A673 (cell line): ENCODE measurements at regions of chr1 and their contacts with region 1.

Region 1: DNA sequence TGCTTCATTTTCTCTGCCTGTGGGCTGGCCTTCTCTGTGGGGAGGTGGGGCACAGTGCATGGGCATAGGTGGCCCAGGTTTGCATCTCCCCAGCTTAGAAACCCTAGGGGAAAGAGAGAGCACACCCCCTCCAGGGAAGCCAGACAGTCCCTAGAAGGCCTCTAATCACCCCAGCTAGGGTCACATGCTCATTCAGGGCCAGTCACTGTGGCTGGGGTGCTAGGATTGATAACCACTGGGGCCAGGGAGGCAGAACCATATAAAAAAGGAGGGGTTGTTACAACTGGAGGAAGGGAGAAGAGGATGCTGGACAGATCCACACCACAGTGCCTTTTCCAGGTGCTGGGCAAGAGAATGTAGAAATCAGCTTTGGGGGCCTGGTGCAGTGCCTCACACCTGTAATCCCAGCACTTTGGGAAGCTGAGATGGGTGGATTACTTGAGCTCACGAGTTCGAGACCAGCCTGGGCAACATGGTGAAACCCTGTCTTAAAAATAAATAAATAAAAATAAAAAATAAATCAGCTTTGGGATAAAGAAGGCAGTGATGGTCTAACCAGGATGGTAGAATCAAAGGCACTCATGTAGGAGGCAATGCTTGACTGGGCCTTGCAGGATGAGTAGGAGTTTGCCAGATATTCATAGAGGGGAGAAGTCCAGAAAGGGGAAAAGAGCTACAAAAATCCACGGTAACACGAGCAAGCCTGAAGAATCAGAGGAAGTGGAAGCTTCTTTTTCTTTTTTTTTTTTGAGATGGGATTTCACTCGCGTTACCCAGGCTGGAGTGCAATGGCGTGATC is 19.5 kb downstream of the FBLIM1 start:
- DNase-seq: no peak
- H3K4me3 ChIP-seq: no peak overlapping the region
- H3K27ac ChIP-seq: no peak overlapping the region
- H3K4me1 ChIP-seq: no peaks in the 10 kb centered on the region
- H3K27me3 ChIP-seq: no peaks in the 10 kb centered on the region
- CTCF ChIP-seq: no peak

Region 2: GRCh38 chr1:15617175-15617880 is 160.8 kb before region 1 on chr1 and contains the start of gene DDI2:
- CTCF ChIA-PET with region 1: no interaction called
- POLR2A ChIA-PET with region 1: no interaction called
- intact Hi-C with region 1: no loop called
- DNase-seq: peak; percentile 100
- H3K4me3 ChIP-seq: peak within 1 kb of the TSS; percentile 89
- H3K27ac ChIP-seq: peak within 1 kb of the TSS; percentile 91
- H3K4me1 ChIP-seq: peaks cover 10% of the 10 kb centered on the region
- H3K27me3 ChIP-seq: no peaks in the 10 kb centered on the region
- CTCF ChIP-seq: no peak
- total RNA-seq, gene DDI2: 38.1 and 41.3 TPM in 2 replicates

Region 3: DNA sequence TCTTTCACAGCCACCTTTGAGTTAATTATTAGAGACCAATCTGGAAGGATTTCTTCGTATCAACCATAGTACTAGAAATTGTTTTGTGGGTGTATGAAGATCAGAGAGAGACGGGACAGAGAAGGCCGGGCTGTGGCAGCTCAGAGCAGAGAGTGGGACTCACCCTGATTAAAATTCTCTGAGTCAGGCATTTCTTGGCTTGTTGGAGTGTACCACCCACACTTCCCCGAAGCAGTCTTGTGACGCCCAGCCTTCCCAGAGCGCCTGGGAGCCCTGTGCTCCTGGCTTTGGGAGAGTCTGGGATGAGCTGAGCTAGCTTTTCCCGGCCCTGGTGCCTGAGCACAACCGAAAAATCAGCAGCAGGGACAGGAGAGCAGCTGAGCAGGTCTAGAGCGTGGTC is 74.5 kb before region 1 on chr1:
- CTCF ChIA-PET with region 1: no interaction called
- POLR2A ChIA-PET with region 1: no interaction called
- intact Hi-C with region 1: no loop called
- DNase-seq: peak; percentile 71
- H3K4me3 ChIP-seq: no peak overlapping the region
- H3K27ac ChIP-seq: peak overlapping the region; percentile 60
- H3K4me1 ChIP-seq: peaks cover 10% of the 10 kb centered on the region
- H3K27me3 ChIP-seq: no peaks in the 10 kb centered on the region
- CTCF ChIP-seq: no peak

Region 4: DNA sequence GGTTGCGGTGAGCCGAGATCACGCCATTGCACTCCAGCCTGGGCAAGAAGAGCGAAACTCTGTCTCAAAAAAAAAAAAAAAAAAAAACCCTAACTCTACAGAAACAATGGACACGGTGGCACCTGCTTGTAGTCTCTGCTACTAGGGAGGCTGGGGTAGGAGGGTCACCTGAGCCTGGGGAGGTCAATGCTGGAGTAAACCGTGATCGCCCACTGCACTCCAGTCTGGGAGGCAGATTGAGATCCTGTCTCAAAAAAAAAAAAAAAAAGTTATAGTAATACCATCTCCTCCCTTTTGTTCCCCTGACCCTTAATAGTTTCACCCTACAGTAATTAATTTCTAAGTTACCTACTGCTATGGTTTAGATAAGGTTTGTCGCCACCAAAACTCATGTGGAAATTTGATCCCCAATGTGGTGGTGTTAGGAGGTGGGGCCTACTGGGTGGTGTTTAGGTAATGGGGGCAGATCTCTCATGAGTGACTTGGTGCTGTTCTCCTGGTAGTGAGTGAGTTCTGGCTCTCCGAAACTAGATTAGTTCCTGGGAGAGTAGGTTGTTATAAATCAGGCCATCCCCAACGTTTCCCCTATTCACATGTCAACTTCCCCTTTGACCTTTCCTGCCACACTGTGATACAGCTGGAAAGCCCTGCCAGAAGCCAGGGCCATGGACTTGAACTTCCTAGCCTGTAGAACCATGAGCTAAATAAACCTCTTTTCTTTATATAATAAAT is 564.4 kb after region 1 on chr1:
- CTCF ChIA-PET with region 1: no interaction called
- POLR2A ChIA-PET with region 1: interaction called, 13 read pairs
- intact Hi-C with region 1: no loop called
- DNase-seq: no peak
- H3K4me3 ChIP-seq: no peak overlapping the region
- H3K27ac ChIP-seq: no peak overlapping the region
- H3K4me1 ChIP-seq: no peaks in the 10 kb centered on the region
- H3K27me3 ChIP-seq: no peaks in the 10 kb centered on the region
- CTCF ChIP-seq: no peak